Aorta (tissue), 5 donors: ENCODE measurements at regions of chr1 and their contacts with region 1.

Region 1: GRCh38 chr1:44594871-44595746 is 79.2 kb downstream of the TMEM53 start:
- DNase-seq: peak; percentile 86 to 96
- ATAC-seq: peak; percentile 88
- H3K4me3 ChIP-seq: no peak overlapping the region
- H3K27ac ChIP-seq: no peak overlapping the region
- H3K4me1 ChIP-seq: no peaks in the 10 kb centered on the region
- H3K27me3 ChIP-seq: no peaks in the 10 kb centered on the region

Region 2: DNA sequence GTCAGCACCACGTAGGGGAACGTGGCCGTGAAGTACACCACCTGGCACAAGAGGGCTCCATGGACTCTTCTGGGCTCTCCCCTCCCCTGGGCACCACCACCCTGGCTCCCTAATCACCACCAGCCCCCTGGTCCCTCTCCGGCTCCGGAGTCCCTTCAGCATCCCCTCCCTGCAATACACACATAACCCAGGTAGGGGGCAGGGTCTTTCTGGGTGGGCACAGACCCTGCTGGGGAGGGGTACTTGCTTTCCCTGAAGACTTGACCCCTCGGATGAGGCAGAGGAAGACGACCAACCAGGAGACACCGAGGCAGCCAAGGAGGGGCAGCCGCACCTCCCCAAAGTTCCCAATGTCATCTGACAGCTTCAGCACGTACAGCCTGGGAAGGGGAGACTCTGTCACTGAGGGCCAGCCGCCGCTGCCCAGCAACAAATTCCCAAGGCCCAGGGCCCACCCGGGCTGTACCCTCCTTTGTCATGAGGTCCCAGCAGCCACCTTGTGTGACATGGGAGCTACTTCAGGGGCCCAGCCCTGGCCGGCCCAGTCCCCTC is 592.4 kb before region 1 on chr1:
- intact Hi-C with region 1: loop called in 1 of 2 experiments (anchors 10 kb)
- DNase-seq: peak in 1 of 2 donors; percentile 65
- ATAC-seq: no peak
- H3K4me3 ChIP-seq: no peak overlapping the region
- H3K27ac ChIP-seq: no peak overlapping the region
- H3K4me1 ChIP-seq: no peaks in the 10 kb centered on the region
- H3K27me3 ChIP-seq: no peaks in the 10 kb centered on the region

Region 3: DNA sequence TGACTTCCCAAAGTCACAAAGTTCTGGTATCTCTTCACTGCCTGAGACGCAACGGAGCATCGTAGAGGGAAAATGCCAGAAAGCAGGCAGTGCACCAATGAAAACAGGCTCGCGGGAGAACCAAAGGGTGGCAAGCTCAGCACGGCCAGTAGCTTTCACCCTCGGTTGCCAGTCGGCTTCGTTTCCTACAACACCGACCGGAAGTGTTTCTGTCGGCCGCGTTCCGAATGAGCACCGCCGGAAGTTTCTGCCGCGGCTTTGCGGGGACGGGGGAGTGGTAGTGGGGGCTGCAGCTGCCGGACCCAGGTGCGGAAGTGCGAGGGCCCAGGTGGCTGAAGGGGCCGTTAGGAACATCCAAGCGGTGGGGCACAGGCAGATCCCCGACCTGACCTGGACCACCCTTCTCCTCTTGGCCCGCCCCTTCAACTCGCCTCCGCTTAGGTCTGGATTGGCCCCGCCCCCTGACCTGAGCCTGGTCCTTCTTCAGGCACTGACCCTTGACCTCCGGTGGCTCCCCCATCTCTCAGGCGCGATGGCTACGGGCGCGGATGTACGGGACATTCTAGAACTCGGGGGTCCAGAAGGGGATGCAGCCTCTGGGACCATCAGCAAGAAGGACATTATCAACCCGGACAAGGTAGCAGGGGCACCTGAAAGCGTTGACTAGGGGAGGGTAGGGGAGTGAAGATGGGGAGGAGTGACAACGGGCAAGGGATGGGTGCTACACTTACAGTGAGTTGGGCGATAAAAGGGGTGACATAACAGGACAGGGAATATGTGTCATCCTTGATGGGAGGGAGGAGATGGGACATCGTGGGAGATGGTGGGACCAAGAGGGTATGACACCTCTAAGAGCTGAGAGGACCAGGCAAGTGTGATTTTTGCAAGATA is 381.6 kb before region 1 on chr1 and contains the start of gene DMAP1:
- intact Hi-C with region 1: loop called (anchors 5 kb)
- DNase-seq: peak; percentile 88 to 94
- ATAC-seq: peak; percentile 93
- H3K4me3 ChIP-seq: peak within 1 kb of the TSS; percentile 23 to 94
- H3K27ac ChIP-seq: no peak within 1 kb of the TSS
- H3K4me1 ChIP-seq: no peaks in the 10 kb centered on the region
- H3K27me3 ChIP-seq: no peaks in the 10 kb centered on the region
- total RNA-seq, gene DMAP1: 30.1 to 36.4 TPM

Region 4: DNA sequence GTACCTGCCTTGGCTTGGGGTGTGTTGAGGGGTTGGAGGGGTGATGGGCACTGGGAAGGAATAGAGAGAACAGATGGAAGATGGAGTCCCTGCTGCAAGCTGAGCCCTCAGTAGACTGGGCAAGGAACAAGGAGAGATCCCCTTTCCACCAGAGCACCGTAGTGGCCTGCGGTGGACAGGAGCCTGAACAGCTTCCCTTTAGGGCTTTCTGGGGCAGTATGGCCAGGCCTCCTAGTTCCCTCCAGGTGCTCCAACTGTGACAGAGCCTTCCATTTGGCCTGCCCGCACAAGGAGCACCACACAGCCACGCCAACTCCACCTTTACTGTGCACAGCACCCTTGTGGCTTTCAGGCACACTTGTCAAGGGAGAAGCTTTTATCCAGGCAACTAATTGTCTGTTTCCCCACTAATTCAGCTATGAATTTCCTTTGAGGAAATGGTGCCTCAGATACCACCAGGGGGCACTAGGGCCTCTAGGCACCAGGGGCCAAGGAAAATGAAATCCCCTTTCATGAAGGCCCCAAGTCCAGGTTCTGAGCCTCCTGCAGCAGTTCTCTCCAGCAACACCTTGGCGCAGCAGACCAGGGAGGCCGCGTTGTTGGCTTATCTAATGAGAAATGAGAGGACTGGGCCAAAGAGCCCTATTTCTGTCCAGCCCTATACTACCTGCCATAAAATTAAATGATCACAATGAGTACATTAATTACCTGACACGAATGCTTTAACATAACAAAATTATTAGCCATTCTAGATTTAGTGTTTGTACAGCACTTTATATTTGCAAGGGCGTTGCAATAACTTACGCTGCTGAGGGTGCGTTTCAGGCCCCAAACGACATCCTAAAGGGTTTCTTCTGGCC is 217.0 kb before region 1 on chr1:
- intact Hi-C with region 1: loop called (anchors 1 to 5 kb)
- DNase-seq: peak in 1 of 2 donors; percentile 59
- ATAC-seq: no peak
- H3K4me3 ChIP-seq: no peak overlapping the region
- H3K27ac ChIP-seq: no peak overlapping the region
- H3K4me1 ChIP-seq: no peaks in the 10 kb centered on the region
- H3K27me3 ChIP-seq: no peaks in the 10 kb centered on the region

Region 5: DNA sequence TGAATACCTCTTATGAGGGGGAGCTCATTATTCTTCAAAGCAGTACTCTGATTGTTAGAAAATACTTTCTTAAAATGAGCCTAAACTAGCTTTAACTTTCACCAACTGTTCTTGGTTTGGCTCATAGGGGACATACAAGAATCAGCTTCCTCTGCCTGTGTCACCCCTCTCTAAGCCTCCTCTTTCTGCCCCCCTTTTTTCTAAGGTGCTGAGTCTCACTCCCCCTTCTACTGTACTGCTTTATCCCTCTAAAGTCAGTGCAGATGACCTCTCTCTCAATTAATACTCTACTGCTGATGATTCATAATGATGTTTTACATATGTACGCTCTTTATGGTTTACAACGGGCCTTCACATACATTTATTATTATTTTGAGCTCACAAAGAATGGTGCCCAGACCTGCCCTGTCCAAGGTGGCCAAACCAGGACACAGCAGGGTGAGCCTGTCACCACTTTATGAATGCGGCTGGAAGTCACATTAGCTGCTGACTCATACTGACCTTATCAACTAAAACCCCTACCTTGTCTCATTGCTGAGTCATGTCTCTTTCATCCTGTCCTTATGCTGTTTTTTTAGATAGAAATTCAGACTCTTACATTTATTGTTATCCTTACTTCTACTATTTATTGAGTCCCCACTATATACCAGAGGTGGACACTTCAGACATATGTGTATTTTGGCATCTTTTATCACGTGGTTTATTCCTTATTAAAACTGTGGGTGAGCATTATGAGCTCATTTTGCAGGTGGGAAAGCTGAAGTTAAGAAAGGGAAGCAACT is 63.1 kb before region 1 on chr1:
- intact Hi-C with region 1: no loop called
- DNase-seq: no peak
- ATAC-seq: no peak
- H3K4me3 ChIP-seq: no peak overlapping the region
- H3K27ac ChIP-seq: no peak overlapping the region
- H3K4me1 ChIP-seq: no peaks in the 10 kb centered on the region
- H3K27me3 ChIP-seq: no peaks in the 10 kb centered on the region